CD4-positive, alpha-beta memory T cell (primary cell): ENCODE measurements at regions of chr1 and their contacts with region 1.

Region 1: GRCh38 chr1:1212780-1213344 is 1.1 kb downstream of the TNFRSF4 start:
- DNase-seq: peak; percentile 46 to 71 (median 57)
- H3K4me3 ChIP-seq: peak overlapping the region; percentile 55 to 78
- H3K4me3 Mint-ChIP-seq: peak overlapping the region; percentile 43 to 83 (median 74)
- H3K27ac ChIP-seq: peak overlapping the region; percentile 86
- H3K27ac Mint-ChIP-seq: peak overlapping the region in 6 of 7 donors; percentile 25 to 98 (median 57)
- H3K4me1 ChIP-seq: peaks cover 80% of the 10 kb centered on the region
- H3K4me1 Mint-ChIP-seq: peaks cover 17 to 64% (median 40%) of the 10 kb centered on the region in 4 donors
- H3K27me3 ChIP-seq: no peaks in the 10 kb centered on the region
- H3K27me3 Mint-ChIP-seq: no peaks in the 10 kb centered on the region

Region 2: DNA sequence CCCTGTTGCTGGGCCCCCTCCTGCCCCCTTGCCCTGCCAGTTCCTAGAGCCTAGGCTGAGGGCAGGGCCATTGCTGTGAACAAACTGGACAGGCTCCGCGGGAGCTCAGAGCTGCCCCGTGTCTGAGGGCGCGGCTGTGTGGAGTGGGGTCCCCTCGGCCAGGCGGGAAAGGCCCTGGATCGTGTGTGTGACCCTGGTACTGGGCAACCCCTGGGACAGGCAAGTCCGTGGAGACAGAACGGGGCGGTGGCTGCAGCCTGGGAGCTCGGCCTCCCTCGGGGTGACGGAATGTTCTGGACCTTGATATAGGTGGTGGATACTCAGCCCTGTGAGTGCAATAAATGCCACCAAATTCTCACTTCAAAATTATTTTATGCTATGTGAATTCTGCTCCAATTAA is 69.2 kb before region 1 on chr1:
- CTCF ChIA-PET with region 1: no interaction called
- POLR2A ChIA-PET with region 1: no interaction called
- intact Hi-C with region 1: no loop called
- DNase-seq: no peak
- H3K4me3 ChIP-seq: no peak overlapping the region
- H3K4me3 Mint-ChIP-seq: peak overlapping the region in 6 of 8 donors; percentile 28 to 68 (median 58)
- H3K27ac ChIP-seq: peak overlapping the region; percentile 55
- H3K27ac Mint-ChIP-seq: peak overlapping the region; percentile 82 to 99 (median 93)
- H3K4me1 ChIP-seq: peaks cover 23% of the 10 kb centered on the region
- H3K4me1 Mint-ChIP-seq: peaks cover 5 to 11% (median 7%) of the 10 kb centered on the region in 4 donors
- H3K27me3 ChIP-seq: no peaks in the 10 kb centered on the region
- H3K27me3 Mint-ChIP-seq: no peaks in the 10 kb centered on the region

Region 3: DNA sequence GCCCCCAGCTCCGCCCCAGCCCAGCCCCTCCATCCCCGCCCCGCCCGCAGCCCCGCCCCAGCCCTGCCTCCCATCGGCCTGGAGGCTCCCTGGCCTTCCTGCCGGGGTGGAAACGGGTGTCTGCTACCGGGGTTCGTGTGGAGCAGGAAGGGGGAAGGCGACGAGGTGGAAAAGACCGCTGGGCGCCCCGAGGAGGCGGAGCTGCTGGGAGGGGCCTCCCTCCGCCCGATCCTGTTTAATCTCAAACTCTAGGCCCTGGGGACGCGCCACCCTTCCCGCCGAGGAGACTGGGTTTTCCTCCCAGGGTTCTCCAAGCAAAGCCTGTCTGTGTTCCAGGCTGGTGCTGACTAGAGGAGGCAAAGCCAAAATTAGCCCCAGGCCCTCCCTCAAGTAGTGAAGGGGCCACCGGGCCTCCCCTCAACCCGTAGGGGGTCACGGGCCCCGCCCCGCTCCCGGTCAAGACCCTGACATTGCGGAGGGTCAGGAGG is 55.4 kb before region 1 on chr1:
- CTCF ChIA-PET with region 1: interaction called, 3 read pairs
- POLR2A ChIA-PET with region 1: interaction called, 13 read pairs
- intact Hi-C with region 1: loop called (anchors 5 kb)
- DNase-seq: peak; percentile 41 to 71 (median 48)
- H3K4me3 ChIP-seq: peak overlapping the region; percentile 56 to 78
- H3K4me3 Mint-ChIP-seq: peak overlapping the region; percentile 63 to 87 (median 79)
- H3K27ac ChIP-seq: peak overlapping the region; percentile 86
- H3K27ac Mint-ChIP-seq: peak overlapping the region; percentile 58 to 90 (median 77)
- H3K4me1 ChIP-seq: peaks cover 8% of the 10 kb centered on the region
- H3K4me1 Mint-ChIP-seq: peaks cover 0 to 14% (median 3%) of the 10 kb centered on the region in 4 donors
- H3K27me3 ChIP-seq: no peaks in the 10 kb centered on the region
- H3K27me3 Mint-ChIP-seq: no peaks in the 10 kb centered on the region